Natural killer cell (primary cell): ENCODE measurements at regions of chr3 and their contacts with region 1.

Region 1: GRCh38 chr3:56988458-56989168 is 71.9 kb upstream of the SPATA12 start:
- DNase-seq: peak; percentile 57 to 90
- ATAC-seq: peak; percentile 73 to 80 (median 75)
- H3K4me3 ChIP-seq: no peak overlapping the region
- H3K4me3 Mint-ChIP-seq: no peak overlapping the region
- H3K27ac ChIP-seq: no peak overlapping the region
- H3K27ac Mint-ChIP-seq: no peak overlapping the region
- H3K4me1 ChIP-seq: peaks cover 6% of the 10 kb centered on the region
- H3K4me1 Mint-ChIP-seq: peaks cover 4 to 5% of the 10 kb centered on the region in 2 donors
- H3K27me3 ChIP-seq: peaks cover 2% of the 10 kb centered on the region
- H3K27me3 Mint-ChIP-seq: peaks cover 8 to 14% of the 10 kb centered on the region in 2 donors
- CTCF ChIP-seq: peak; percentile 93

Region 2: DNA sequence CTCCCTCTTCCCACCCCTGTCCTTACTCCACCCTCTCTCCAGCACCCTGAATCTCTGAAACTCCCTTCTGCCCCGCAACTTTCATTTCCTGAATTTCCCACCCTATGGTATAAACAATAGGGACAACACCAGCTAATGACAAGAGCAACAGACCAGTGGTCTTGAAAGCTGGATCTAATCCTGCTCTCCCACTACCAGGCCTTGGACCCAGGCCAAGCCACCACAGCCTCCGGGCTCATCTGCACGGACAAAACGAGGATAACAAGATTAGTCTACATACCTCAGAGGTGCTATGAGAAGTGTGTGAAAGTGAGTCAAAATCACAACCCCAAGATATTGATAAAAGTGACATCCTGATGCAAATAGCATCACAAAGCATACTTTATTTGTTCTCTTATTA is 648.9 kb before region 1 on chr3:
- intact Hi-C with region 1: loop called (anchors 2 kb)
- DNase-seq: no peak
- ATAC-seq: no peak
- H3K4me3 ChIP-seq: no peak overlapping the region
- H3K4me3 Mint-ChIP-seq: no peak overlapping the region
- H3K27ac ChIP-seq: no peak overlapping the region
- H3K27ac Mint-ChIP-seq: no peak overlapping the region
- H3K4me1 ChIP-seq: no peaks in the 10 kb centered on the region
- H3K4me1 Mint-ChIP-seq: no peaks in the 10 kb centered on the region
- H3K27me3 ChIP-seq: no peaks in the 10 kb centered on the region
- H3K27me3 Mint-ChIP-seq: peaks cover 0 to 9% of the 10 kb centered on the region in 2 donors
- CTCF ChIP-seq: no peak

Region 3: GRCh38 chr3:56556908-56557830 is 431.4 kb before region 1 on chr3 and contains the start of gene CCDC66:
- intact Hi-C with region 1: loop called (anchors 5 kb)
- DNase-seq: peak; percentile 89 to 96
- ATAC-seq: peak; percentile 96 to 98 (median 97)
- H3K4me3 ChIP-seq: peak within 1 kb of the TSS; percentile 87
- H3K4me3 Mint-ChIP-seq: peak within 1 kb of the TSS; percentile 98
- H3K27ac ChIP-seq: peak within 1 kb of the TSS; percentile 90
- H3K27ac Mint-ChIP-seq: peak within 1 kb of the TSS; percentile 95 to 100
- H3K4me1 ChIP-seq: peaks cover 3% of the 10 kb centered on the region
- H3K4me1 Mint-ChIP-seq: peaks cover 28 to 30% of the 10 kb centered on the region in 2 donors
- H3K27me3 ChIP-seq: no peaks in the 10 kb centered on the region
- H3K27me3 Mint-ChIP-seq: peaks cover 8 to 28% of the 10 kb centered on the region in 2 donors
- CTCF ChIP-seq: peak; percentile 66
- total RNA-seq, gene CCDC66: 25.5 to 36.0 (median 35.0) TPM

Region 4: DNA sequence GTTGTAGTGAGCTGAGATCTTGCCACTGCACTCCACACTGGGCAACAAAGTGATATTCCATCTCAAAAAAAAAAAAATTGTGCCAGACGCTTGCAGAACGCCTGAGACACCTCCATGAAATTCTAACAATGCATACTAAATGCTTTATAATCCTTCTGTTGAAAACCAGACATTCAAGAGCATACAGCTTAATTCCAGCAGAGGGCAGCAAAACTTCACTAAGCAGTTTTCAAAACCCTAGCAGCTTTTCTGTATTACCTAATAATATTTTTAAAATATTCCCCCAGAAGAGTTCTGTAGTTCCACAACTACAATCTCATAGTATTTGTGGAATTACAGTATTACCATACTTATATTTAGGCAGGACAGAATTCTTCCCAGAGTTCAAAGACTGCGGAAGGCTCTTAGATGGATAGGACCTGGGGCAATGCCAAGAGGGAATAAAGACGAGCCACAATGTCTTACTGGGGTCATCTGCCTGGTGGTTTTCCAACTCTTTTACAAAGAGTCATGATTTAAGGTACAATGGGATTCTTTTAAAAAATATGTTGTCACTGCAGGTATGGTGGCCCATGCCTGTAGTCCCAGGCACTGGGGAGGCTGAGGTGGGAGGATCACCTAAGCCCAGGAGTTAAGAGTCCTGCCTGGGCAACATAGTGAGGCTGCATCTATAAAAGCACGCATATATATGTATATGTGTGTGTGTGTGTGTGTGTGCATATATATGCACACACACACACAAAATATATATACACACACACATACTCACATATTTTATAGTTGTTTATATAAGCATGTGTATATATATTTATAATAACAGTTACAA is 285.9 kb before region 1 on chr3:
- intact Hi-C with region 1: loop called (anchors 1 kb)
- DNase-seq: peak in 1 of 2 donors; percentile 89
- ATAC-seq: peak; percentile 77 to 83 (median 82)
- H3K4me3 ChIP-seq: no peak overlapping the region
- H3K4me3 Mint-ChIP-seq: no peak overlapping the region
- H3K27ac ChIP-seq: no peak overlapping the region
- H3K27ac Mint-ChIP-seq: peak overlapping the region in 1 of 2 donors; percentile 50
- H3K4me1 ChIP-seq: peaks cover 12% of the 10 kb centered on the region
- H3K4me1 Mint-ChIP-seq: peaks cover 16% of the 10 kb centered on the region in 2 donors
- H3K27me3 ChIP-seq: no peaks in the 10 kb centered on the region
- H3K27me3 Mint-ChIP-seq: no peaks in the 10 kb centered on the region
- CTCF ChIP-seq: peak; percentile 89

Region 5: GRCh38 chr3:56855856-56856512 is 132.6 kb before region 1 on chr3:
- intact Hi-C with region 1: loop called (anchors 1 kb)
- DNase-seq: peak in 1 of 2 donors; percentile 45
- ATAC-seq: no peak
- H3K4me3 ChIP-seq: no peak overlapping the region
- H3K4me3 Mint-ChIP-seq: no peak overlapping the region
- H3K27ac ChIP-seq: no peak overlapping the region
- H3K27ac Mint-ChIP-seq: no peak overlapping the region
- H3K4me1 ChIP-seq: peaks cover 15% of the 10 kb centered on the region
- H3K4me1 Mint-ChIP-seq: peaks cover 20 to 23% of the 10 kb centered on the region in 2 donors
- H3K27me3 ChIP-seq: no peaks in the 10 kb centered on the region
- H3K27me3 Mint-ChIP-seq: no peaks in the 10 kb centered on the region
- CTCF ChIP-seq: peak; percentile 40

Region 6: GRCh38 chr3:56952061-56952460 is 36.6 kb before region 1 on chr3:
- intact Hi-C with region 1: no loop called
- DNase-seq: no peak
- ATAC-seq: no peak
- H3K4me3 ChIP-seq: no peak overlapping the region
- H3K4me3 Mint-ChIP-seq: no peak overlapping the region
- H3K27ac ChIP-seq: no peak overlapping the region
- H3K27ac Mint-ChIP-seq: no peak overlapping the region
- H3K4me1 ChIP-seq: no peaks in the 10 kb centered on the region
- H3K4me1 Mint-ChIP-seq: no peaks in the 10 kb centered on the region
- H3K27me3 ChIP-seq: no peaks in the 10 kb centered on the region
- H3K27me3 Mint-ChIP-seq: no peaks in the 10 kb centered on the region
- CTCF ChIP-seq: no peak